Vagina (tissue), 2 donors: ENCODE measurements at regions of chr12 and their contacts with region 1.

Region 1: GRCh38 chr12:117897372-117898161 is 71.2 kb downstream of the KSR2 start:
- DNase-seq: no peak
- H3K4me3 ChIP-seq: no peak overlapping the region
- H3K27ac ChIP-seq: no peak overlapping the region
- H3K4me1 ChIP-seq: no peaks in the 10 kb centered on the region
- H3K27me3 ChIP-seq: no peaks in the 10 kb centered on the region
- CTCF ChIP-seq: no peak
- POLR2A ChIP-seq: no peak

Region 2: DNA sequence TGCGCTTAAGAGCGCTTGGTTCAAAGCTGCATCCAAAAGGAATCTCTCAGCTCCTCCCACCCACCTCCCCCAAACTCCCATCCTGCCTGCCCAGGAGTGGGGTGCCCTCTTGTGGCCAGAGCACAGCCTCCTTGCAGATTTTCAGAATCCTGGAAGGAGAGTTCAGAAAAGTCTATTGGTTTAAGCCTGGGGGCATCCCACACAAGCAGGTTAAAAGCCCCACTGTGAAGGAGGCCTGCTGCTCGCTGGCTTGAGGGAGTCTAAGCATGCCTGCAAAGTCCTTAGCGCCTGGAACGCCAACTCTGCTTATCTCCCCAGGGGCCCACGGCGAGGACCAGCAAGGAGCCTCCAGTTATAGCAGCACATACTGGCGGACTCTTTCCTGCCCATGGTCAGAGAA is 225.8 kb before region 1 on chr12:
- intact Hi-C with region 1: no loop called
- DNase-seq: no peak
- H3K4me3 ChIP-seq: no peak overlapping the region
- H3K27ac ChIP-seq: no peak overlapping the region
- H3K4me1 ChIP-seq: no peaks in the 10 kb centered on the region
- H3K27me3 ChIP-seq: no peaks in the 10 kb centered on the region
- CTCF ChIP-seq: no peak
- POLR2A ChIP-seq: no peak

Region 3: DNA sequence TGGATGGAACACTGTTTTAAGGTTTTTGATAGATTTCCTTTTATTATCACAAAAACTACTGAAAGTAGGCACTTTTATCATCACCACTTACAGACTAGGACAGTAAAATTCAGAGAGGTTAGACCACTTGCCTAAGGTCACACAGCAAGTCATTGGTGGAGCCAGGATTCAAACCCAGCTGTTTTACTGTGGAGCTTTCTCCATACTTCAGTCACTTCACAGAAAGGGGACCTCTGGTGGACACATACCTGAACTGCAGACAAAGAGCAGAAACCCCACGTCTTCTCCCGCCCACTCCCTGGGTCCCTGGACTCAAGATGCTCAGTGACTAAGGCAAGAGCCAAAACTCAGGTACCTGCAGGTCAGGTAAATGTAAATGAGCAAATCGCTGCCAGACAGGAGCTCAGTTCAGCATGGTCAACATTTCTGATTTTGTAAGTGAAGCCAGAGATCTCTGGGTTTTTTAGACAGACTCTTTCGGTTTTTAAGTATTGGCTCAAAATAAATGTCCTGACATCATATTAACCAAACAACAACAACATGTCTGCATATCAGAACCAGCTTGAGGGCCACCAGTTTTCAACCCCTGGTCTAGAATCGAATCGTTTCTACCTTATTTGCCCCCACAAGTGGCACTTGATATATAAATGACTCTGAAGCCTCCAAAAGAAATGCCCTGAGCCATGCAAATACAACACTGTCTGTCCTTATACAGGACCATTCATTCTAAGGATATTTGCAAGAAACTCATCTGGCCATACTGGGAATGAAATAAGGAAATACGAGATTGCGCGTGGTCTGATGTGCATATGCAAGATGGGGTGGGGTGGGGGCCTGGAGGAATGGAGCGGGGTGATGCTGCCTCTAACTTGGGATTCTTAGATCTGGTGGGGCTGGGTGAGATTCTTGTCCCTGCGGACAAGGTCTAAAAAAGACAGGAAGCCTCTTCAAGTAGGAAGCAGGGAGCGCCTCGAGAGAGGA is 39.6 kb before region 1 on chr12:
- intact Hi-C with region 1: no loop called
- DNase-seq: no peak
- H3K4me3 ChIP-seq: no peak overlapping the region
- H3K27ac ChIP-seq: no peak overlapping the region
- H3K4me1 ChIP-seq: no peaks in the 10 kb centered on the region
- H3K27me3 ChIP-seq: no peaks in the 10 kb centered on the region
- CTCF ChIP-seq: no peak
- POLR2A ChIP-seq: no peak

Region 4: GRCh38 chr12:117963836-117964235 is 66.3 kb after region 1 on chr12:
- intact Hi-C with region 1: no loop called
- DNase-seq: peak in 1 of 2 donors; percentile 64
- H3K4me3 ChIP-seq: no peak overlapping the region
- H3K27ac ChIP-seq: no peak overlapping the region
- H3K4me1 ChIP-seq: no peaks in the 10 kb centered on the region
- H3K27me3 ChIP-seq: no peaks in the 10 kb centered on the region
- CTCF ChIP-seq: no peak
- POLR2A ChIP-seq: no peak

Region 5: DNA sequence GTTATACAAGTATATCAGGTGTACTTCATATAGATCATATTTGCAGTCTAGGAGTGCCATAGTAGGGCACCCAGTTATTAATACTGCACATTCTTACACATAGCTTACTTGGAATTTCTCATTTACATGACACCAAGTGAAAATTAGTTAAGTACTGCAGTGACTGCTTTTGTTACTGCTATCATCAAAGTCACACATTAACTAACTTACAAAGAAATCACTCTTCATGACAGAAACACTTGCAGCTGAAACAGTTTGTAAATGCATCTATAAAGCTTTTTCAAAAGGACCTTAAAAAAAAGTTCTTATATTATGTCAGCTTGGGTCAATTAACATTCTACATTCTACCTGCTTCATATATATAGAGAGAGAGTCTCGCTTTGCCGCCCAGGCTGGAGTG is 101.2 kb after region 1 on chr12:
- intact Hi-C with region 1: loop called (anchors 5 kb)
- DNase-seq: no peak
- H3K4me3 ChIP-seq: no peak overlapping the region
- H3K27ac ChIP-seq: no peak overlapping the region
- H3K4me1 ChIP-seq: no peaks in the 10 kb centered on the region
- H3K27me3 ChIP-seq: no peaks in the 10 kb centered on the region
- CTCF ChIP-seq: no peak
- POLR2A ChIP-seq: no peak

Region 6: GRCh38 chr12:118023301-118023860 is 125.8 kb after region 1 on chr12:
- intact Hi-C with region 1: no loop called
- DNase-seq: no peak
- H3K4me3 ChIP-seq: no peak overlapping the region
- H3K27ac ChIP-seq: no peak overlapping the region
- H3K4me1 ChIP-seq: no peaks in the 10 kb centered on the region
- H3K27me3 ChIP-seq: no peaks in the 10 kb centered on the region
- CTCF ChIP-seq: no peak
- POLR2A ChIP-seq: no peak